ENCODE measurements at regions of chr15 and their contacts with region 1.

Region 1: GRCh38 chr15:81155375-81156218 is 21.5 kb downstream of the CFAP161 start:
- DNase-seq: no peak

Region 2: DNA sequence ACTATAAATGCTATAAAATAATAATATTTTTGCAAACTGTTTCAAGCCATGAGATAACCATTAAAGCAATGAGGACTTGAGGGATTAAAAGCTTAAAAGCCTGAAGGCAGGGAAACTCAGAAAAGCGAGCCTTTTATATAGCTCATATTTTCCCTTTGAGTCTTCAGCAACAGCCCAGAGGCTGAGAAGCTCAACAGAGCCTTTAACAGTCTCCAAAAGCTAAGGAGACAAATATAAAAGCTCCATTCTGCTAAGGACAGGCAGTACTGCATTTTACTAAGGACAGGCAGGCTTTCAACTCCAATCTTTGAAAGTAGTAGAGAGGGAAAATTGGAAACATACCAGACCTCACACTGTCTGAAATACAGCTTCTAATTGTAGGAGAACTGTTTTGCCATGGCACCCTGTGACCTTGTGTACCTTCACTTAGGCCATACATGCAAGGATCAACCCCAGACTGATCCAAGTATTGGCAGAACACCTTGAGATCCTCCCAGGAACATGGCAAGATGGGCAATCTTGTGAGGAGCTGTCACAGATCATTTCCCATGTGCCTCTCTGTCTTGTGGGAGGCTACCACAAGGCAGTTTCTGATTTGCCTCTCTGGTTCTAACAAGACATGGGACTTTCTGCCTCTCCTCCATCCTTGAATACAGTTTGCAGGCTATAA is 804.5 kb before region 1 on chr15:
- intact Hi-C with region 1: no loop called
- DNase-seq: no peak

Region 3: DNA sequence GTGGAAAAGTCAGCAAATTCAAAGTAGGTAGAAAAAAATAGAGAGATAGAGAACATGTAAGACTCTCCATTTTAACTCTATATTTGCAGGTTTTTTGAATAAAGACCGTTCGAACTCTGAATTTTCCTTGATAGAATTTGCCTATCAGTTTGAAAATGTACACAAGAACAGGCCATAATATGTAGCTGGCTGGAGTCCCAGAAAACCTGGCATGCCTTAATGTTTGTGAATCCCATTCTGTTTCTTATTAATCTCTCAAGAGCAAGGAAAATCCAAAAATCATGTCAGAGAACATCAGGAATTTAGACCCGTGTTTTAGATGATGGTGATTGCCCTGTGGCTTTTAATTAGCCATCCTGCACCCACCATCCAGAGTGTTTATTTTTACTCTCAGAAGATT is 28.7 kb before region 1 on chr15:
- intact Hi-C with region 1: loop called in 1 of 2 experiments (anchors 1 kb)
- DNase-seq: no peak

Region 4: GRCh38 chr15:81256916-81257315 is 101.3 kb after region 1 on chr15:
- intact Hi-C with region 1: loop called (anchors 10 kb)
- DNase-seq: no peak

Region 5: DNA sequence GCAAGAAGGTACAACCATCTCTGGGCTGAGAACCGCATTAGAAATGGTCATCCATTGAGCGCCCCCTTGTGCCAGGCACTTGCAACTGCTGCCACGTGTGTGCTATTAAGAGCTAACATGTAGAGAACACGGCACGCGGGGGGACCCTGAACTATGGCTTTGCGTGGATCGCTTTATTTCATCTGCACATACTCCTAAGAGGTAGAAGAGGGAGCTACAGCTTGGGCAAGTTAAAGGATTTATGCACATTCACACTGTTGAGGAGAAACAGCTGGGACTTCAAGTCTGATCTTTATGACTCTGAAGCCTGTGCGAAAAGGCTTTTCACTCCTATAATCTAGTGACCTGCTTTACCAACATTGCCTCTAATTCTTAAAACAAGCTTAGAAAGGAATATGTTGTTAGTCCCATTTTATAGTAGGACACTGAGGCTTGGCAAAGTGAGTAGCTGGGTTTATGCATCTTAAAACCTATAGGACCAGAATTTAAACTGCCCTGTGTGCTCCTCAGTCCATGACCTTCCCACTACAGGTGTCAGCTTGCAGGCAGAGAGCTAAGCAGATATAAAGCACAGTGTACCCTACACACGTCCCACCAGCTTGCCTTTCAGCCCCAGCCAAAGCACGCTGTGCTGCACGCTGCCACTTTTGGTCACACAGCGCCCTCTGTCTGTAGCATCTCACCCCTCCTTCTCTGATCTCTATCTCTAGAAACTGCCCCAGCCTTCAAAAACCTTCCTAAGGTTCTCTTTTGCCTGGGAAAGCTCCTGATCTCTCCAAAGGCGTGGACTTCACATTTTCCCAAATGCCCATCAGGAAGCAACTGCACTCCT is 110.6 kb after region 1 on chr15:
- intact Hi-C with region 1: loop called in 1 of 2 experiments (anchors 10 kb)
- DNase-seq: peak; percentile 93